Body of pancreas (tissue), 4 donors: ENCODE measurements at regions of chr5 and their contacts with region 1.

Region 1: DNA sequence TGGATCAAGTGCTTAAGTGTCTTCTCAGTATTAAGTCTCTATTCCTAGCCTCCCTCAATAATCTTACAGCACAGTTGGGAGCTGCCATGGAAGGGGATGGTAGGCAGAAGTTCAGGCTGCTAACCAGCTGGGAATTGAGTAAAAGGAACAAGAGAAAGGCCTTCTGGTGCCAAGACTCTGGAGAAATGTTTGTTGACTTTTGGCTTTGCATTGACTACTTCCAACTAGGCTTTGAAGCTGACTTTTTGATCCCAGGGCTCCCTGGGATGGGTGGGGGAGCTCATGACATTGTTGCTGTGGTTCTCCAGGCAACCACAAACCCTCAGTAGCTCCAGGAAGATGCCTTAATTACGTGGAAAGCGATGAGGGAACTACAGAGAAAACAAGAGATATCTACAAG is 85.2 kb upstream of the HTR4 start:
- DNase-seq: no peak
- ATAC-seq: peak; percentile 19
- H3K4me3 ChIP-seq: no peak overlapping the region
- H3K27ac ChIP-seq: peak overlapping the region; percentile 7 to 61 (median 43)
- H3K4me1 ChIP-seq: peaks cover 5% of the 10 kb centered on the region
- H3K27me3 ChIP-seq: no peaks in the 10 kb centered on the region
- CTCF ChIP-seq: no peak
- POLR2A ChIP-seq: no peak

Region 2: DNA sequence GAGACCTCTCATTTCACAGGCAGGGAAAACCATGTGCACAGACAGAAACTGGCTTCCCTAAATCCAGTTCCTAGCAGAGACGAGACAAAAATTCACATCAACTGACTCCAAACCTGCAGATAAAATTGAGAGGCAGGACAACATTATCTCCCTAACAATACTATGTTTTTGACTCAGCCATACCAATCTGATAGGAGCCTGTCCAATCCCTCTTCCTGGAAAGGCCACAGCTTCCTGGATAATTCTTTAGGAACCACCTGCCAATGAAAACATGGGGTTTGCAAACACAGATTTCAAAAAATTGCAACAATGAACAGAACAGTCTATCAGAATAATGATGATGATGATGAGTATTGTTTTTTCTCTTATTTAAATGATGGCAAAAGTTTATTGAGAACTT is 300.9 kb after region 1 on chr5:
- intact Hi-C with region 1: loop called (anchors 5 kb)
- DNase-seq: no peak
- ATAC-seq: no peak
- H3K4me3 ChIP-seq: no peak overlapping the region
- H3K27ac ChIP-seq: no peak overlapping the region
- H3K4me1 ChIP-seq: no peaks in the 10 kb centered on the region
- H3K27me3 ChIP-seq: no peaks in the 10 kb centered on the region
- CTCF ChIP-seq: no peak
- POLR2A ChIP-seq: no peak